CD8-positive, alpha-beta memory T cell (primary cell): ENCODE measurements at regions of chr16 and their contacts with region 1.

Region 1: GRCh38 chr16:3094289-3095027 is 4.6 kb downstream of the ZSCAN10 start:
- DNase-seq: peak; percentile 38 to 69 (median 50)
- H3K4me3 ChIP-seq: no peak overlapping the region
- H3K4me3 Mint-ChIP-seq: peak overlapping the region in 6 of 7 donors; percentile 14 to 39 (median 24)
- H3K27ac ChIP-seq: no peak overlapping the region
- H3K27ac Mint-ChIP-seq: peak overlapping the region; percentile 28 to 89 (median 68)
- H3K4me1 ChIP-seq: peaks cover 39% of the 10 kb centered on the region
- H3K4me1 Mint-ChIP-seq: peaks cover 29 to 59% (median 31%) of the 10 kb centered on the region in 3 donors
- H3K27me3 ChIP-seq: no peaks in the 10 kb centered on the region
- H3K27me3 Mint-ChIP-seq: no peaks in the 10 kb centered on the region

Region 2: DNA sequence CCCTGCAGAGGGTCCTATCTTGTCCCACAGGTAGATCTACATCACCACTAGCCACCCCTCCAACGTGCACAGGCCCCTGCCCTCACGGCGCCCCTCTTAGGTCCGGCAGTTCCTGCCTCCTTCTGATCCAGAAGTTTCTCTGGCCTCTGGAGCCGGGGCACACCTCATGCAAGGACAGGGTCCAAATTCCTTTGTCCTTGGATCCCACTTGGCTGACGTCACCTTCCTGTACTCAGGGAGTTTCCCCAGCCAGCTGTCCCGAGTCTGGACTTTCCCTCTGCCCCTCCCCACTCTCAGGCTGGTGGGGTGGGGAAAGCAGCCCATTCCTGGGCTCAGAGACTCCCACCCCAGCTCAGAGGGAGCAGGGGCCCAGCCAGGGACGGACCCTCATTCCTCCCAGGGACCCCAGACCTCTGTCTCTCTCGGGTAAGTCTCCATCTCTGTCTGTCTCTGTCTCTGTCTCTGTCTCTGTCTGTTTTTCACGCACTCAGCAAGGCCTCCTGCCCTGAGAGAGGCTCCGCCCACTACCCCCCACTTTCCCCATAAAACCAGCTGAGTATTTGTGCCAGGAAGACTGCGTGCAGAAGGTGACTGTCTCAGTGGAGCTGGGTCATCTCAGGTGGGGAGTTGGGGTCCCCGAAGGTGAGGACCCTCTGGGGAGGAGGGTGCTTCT is 29.3 kb before region 1 on chr16 and contains the start of gene IL32:
- CTCF ChIA-PET with region 1: interaction called, 49 read pairs
- POLR2A ChIA-PET with region 1: interaction called, 6 read pairs
- DNase-seq: peak; percentile 44 to 74 (median 65)
- H3K4me3 ChIP-seq: peak within 1 kb of the TSS; percentile 92
- H3K4me3 Mint-ChIP-seq: peak within 1 kb of the TSS; percentile 98 to 100 (median 100)
- H3K27ac ChIP-seq: peak within 1 kb of the TSS; percentile 81
- H3K27ac Mint-ChIP-seq: peak within 1 kb of the TSS; percentile 88 to 99 (median 96)
- H3K4me1 ChIP-seq: peaks cover 54% of the 10 kb centered on the region
- H3K4me1 Mint-ChIP-seq: peaks cover 49 to 74% (median 68%) of the 10 kb centered on the region in 3 donors
- H3K27me3 ChIP-seq: no peaks in the 10 kb centered on the region
- H3K27me3 Mint-ChIP-seq: no peaks in the 10 kb centered on the region
- total RNA-seq, gene IL32: 975 to 992 TPM

Region 3: DNA sequence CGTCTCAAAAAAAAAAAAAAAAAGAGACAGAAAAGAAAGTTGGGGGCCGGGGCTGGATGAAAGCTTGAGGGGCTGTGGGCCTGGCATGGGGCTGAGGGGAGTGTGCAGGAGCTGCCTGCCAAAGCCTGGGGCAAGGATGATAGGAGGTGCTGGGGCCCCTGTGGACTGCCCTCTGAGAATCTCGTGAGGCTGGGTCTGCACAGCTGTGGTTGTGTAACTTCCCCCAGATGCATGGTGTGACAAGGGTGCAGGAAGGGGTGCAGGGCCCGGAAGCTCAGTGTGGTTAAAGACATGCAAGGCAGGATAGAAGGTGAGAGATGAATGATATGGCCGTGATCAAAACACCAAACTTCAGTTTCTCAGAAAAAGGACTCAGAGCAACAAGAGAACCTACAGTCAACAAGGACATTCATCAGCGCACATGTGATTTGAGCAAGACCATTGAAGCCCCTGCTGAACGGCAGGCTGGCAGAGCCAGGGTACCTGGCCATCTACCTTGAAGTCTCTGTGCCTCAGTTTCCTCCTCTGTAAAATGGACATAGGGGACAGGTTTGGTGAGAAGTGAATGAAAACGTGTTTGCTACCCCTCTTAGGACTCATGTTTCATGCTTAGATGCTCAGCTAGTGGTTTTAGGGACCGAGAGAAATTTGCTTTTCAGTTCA is 19.5 kb before region 1 on chr16:
- CTCF ChIA-PET with region 1: interaction called, 69 read pairs
- POLR2A ChIA-PET with region 1: interaction called, 27 read pairs
- DNase-seq: peak; percentile 68 to 94 (median 90)
- H3K4me3 ChIP-seq: peak overlapping the region; percentile 19
- H3K4me3 Mint-ChIP-seq: peak overlapping the region; percentile 58 to 91 (median 79)
- H3K27ac ChIP-seq: peak overlapping the region; percentile 45
- H3K27ac Mint-ChIP-seq: peak overlapping the region; percentile 88 to 97 (median 95)
- H3K4me1 ChIP-seq: peaks cover 94% of the 10 kb centered on the region
- H3K4me1 Mint-ChIP-seq: peaks cover 89 to 97% (median 94%) of the 10 kb centered on the region in 3 donors
- H3K27me3 ChIP-seq: no peaks in the 10 kb centered on the region
- H3K27me3 Mint-ChIP-seq: no peaks in the 10 kb centered on the region

Region 4: DNA sequence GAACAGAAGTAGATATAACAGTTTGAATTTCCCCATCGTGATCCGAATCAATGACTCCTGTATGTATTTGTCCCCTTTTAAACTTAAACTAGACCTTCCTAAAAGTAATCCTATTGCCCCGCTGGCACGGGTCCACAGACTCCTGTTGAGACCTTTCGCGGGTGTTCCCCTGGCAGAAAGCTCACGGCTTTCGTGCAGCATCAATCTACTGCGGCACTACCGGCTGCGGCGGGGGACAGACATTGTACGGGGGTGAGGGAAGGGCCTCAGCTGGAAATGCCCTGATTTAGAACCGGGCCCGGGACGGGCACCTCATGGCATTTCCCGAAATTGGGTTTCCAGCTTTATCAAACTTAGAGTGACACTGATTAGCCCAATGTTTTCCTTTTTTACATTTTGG is 14.4 kb before region 1 on chr16:
- CTCF ChIA-PET with region 1: interaction called, 69 read pairs
- POLR2A ChIA-PET with region 1: interaction called, 27 read pairs
- DNase-seq: no peak
- H3K4me3 ChIP-seq: no peak overlapping the region
- H3K4me3 Mint-ChIP-seq: peak overlapping the region in 4 of 7 donors; percentile 3 to 60 (median 36)
- H3K27ac ChIP-seq: no peak overlapping the region
- H3K27ac Mint-ChIP-seq: peak overlapping the region; percentile 9 to 94 (median 69)
- H3K4me1 ChIP-seq: peaks cover 63% of the 10 kb centered on the region
- H3K4me1 Mint-ChIP-seq: peaks cover 65 to 90% (median 65%) of the 10 kb centered on the region in 3 donors
- H3K27me3 ChIP-seq: no peaks in the 10 kb centered on the region
- H3K27me3 Mint-ChIP-seq: no peaks in the 10 kb centered on the region

Region 5: DNA sequence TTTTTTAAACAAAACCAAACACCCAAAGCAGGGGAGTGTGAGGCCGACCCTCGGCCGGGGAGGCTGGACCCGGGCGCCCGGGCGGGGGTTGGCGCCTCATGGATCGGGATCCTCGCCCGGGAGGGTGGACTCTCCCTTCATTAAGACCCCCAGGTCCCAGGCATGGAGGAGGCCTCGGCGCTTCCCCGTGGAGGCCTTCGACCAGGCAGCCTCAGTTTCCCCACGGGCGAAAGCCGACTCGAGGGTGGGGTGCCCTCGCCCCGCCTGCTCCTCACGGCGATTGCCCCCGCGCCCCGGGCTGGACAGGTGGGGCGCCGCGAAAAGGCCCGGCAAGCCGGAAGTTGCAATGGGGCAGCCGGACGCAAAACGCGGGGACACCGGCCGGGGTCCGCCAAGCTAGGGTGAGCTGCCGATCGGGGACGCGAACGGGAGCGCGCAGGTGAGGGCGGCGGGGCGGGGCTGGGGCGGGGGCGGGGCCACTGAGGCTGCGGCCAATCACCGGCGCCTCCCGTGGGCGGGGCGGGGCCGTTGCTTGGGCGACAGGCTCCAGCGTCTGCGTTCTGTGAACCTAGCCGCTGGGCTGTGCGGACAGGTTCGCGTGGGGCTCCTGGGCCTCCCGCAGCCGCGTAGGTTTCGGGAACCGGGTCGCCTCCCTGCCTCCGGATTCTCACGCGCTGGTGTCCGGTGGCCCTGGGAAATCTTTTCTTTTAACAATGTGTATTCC is 11.9 kb after region 1 on chr16:
- CTCF ChIA-PET with region 1: interaction called, 11 read pairs
- POLR2A ChIA-PET with region 1: interaction called, 3 read pairs
- DNase-seq: peak; percentile 83 to 95 (median 88)
- H3K4me3 ChIP-seq: peak overlapping the region; percentile 75
- H3K4me3 Mint-ChIP-seq: peak overlapping the region; percentile 86 to 93 (median 88)
- H3K27ac ChIP-seq: peak overlapping the region; percentile 72
- H3K27ac Mint-ChIP-seq: peak overlapping the region; percentile 73 to 95 (median 91)
- H3K4me1 ChIP-seq: peaks cover 21% of the 10 kb centered on the region
- H3K4me1 Mint-ChIP-seq: peaks cover 23 to 29% (median 24%) of the 10 kb centered on the region in 3 donors
- H3K27me3 ChIP-seq: no peaks in the 10 kb centered on the region
- H3K27me3 Mint-ChIP-seq: no peaks in the 10 kb centered on the region